GM12878 (cell line): ENCODE measurements at regions of chr15 and their contacts with region 1.

Region 1: GRCh38 chr15:70488002-70488605 is 275.3 kb downstream of the UACA start:
- DNase-seq: no peak
- ATAC-seq: peak; percentile 4; the same call in 1 of the 3 replicates
- H3K4me3 ChIP-seq: no peak overlapping the region
- H3K27ac ChIP-seq: no peak overlapping the region
- H3K4me1 ChIP-seq: peaks cover 51% of the 10 kb centered on the region
- H3K27me3 ChIP-seq: no peaks in the 10 kb centered on the region; a peak in 1 of 4 replicates
- CTCF ChIP-seq: peak; percentile 94 to 98 (median 96); a peak in 5 of 6 replicates
- EP300 ChIP-seq: no peak
- POLR2A ChIP-seq: no peak
- RAD21 ChIP-seq: peak; percentile 95

Region 2: DNA sequence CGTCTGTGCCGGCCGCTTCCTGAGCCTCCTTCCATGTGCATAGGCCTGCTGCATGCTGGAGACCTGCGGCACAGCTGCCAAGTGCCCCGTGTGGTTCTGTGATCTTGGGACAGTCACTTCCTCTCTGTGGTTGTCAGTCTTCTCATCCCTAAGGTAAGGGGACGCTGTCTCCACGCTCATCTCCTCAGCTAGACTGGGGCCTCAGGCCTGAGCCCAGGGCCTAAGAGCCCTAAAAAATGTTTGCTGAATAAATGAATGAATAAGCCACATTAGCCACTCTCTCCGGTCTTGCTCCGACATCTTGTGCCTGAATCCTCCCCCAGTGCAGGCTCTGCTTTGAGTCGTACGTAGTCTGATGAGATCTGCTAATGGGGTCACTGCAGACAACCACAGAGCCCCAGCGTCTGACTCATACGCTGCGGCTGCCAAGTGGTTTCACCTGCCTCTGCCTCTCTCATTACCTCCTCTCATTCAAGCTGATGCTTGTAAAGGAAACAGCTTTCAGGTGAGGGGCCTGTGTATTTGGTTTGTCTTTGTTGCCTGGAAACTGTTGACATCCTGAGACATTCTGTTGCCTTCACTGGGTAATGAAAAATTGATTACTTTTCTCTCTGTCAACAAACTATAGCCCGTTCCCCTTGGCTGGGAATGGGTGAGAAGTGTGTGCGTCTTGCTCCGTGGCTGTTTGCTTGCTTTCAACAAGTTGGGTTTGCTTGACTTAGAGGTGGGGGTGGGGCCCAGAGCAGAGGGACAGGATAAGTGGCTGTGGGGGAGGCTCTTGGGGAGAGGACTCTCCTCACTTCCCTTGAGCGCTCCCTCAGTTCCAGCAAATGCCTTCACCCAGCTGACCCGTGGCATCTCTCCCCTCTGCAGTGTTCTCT is 1019.6 kb before region 1 on chr15:
- CTCF ChIA-PET with region 1: interaction called, 3 read pairs
- POLR2A ChIA-PET with region 1: no interaction called
- RAD21 ChIA-PET with region 1: no interaction called
- SMC1A ChIA-PET with region 1: interaction called, 3 read pairs
- in situ Hi-C with region 1: loop called (anchors 5 kb)
- intact Hi-C with region 1: no loop called
- DNase-seq: no peak
- ATAC-seq: peak; percentile 95
- H3K4me3 ChIP-seq: no peak overlapping the region
- H3K27ac ChIP-seq: no peak overlapping the region
- H3K4me1 ChIP-seq: peaks cover 18% of the 10 kb centered on the region
- H3K27me3 ChIP-seq: no peaks in the 10 kb centered on the region
- CTCF ChIP-seq: no peak
- EP300 ChIP-seq: peak; percentile 49 to 61
- POLR2A ChIP-seq: no peak
- RAD21 ChIP-seq: no peak

Region 3: GRCh38 chr15:69729161-69729748 is 758.8 kb before region 1 on chr15:
- CTCF ChIA-PET with region 1: no interaction called
- POLR2A ChIA-PET with region 1: no interaction called
- RAD21 ChIA-PET with region 1: no interaction called
- SMC1A ChIA-PET with region 1: no interaction called
- in situ Hi-C with region 1: no loop called
- intact Hi-C with region 1: loop called (anchors 2 kb)
- DNase-seq: no peak
- ATAC-seq: peak; percentile 55; the same call in 2 of the 3 replicates
- H3K4me3 ChIP-seq: no peak overlapping the region
- H3K27ac ChIP-seq: no peak overlapping the region
- H3K4me1 ChIP-seq: peaks cover 8% of the 10 kb centered on the region; the same call in 1 of the 2 replicates
- H3K27me3 ChIP-seq: peaks cover 0 to 5% of the 10 kb centered on the region in 2 experiments; a peak in 2 of 4 replicates
- CTCF ChIP-seq: peak; percentile 67 to 82 (median 71)
- EP300 ChIP-seq: no peak
- POLR2A ChIP-seq: no peak
- RAD21 ChIP-seq: peak; percentile 83

Region 4: GRCh38 chr15:70014860-70015490 is 473.1 kb before region 1 on chr15:
- CTCF ChIA-PET with region 1: no interaction called
- POLR2A ChIA-PET with region 1: no interaction called
- RAD21 ChIA-PET with region 1: no interaction called
- SMC1A ChIA-PET with region 1: interaction called, 3 read pairs
- in situ Hi-C with region 1: no loop called
- intact Hi-C with region 1: loop called (anchors 5 kb)
- DNase-seq: peak; percentile 93
- ATAC-seq: peak; percentile 89
- H3K4me3 ChIP-seq: peak overlapping the region; percentile 10; the same call in 1 of the 2 replicates
- H3K27ac ChIP-seq: peak overlapping the region; percentile 84
- H3K4me1 ChIP-seq: peaks cover 60% of the 10 kb centered on the region
- H3K27me3 ChIP-seq: no peaks in the 10 kb centered on the region
- CTCF ChIP-seq: peak in 1 of 3 experiments; percentile 54; a peak in 2 of 6 replicates
- EP300 ChIP-seq: peak; percentile 76 to 79; a peak in 3 of 4 replicates
- POLR2A ChIP-seq: peak; percentile 79
- RAD21 ChIP-seq: peak; percentile 44; the same call in 1 of the 2 replicates

Region 5: GRCh38 chr15:70259028-70259424 is 229.1 kb before region 1 on chr15:
- CTCF ChIA-PET with region 1: interaction called, 4 read pairs
- POLR2A ChIA-PET with region 1: no interaction called
- RAD21 ChIA-PET with region 1: no interaction called
- SMC1A ChIA-PET with region 1: no interaction called
- in situ Hi-C with region 1: no loop called
- intact Hi-C with region 1: loop called (anchors 2 kb)
- DNase-seq: no peak
- ATAC-seq: peak; percentile 13; the same call in 2 of the 3 replicates
- H3K4me3 ChIP-seq: no peak overlapping the region
- H3K27ac ChIP-seq: 0 out of 2 replicates have a peak overlapping the region, but pooled peaks have one; percentile 42
- H3K4me1 ChIP-seq: peaks cover 49% of the 10 kb centered on the region
- H3K27me3 ChIP-seq: no peaks in the 10 kb centered on the region
- CTCF ChIP-seq: no peak
- EP300 ChIP-seq: no peak
- POLR2A ChIP-seq: no peak; the same call in 1 of the 2 replicates
- RAD21 ChIP-seq: no peak

Region 6: GRCh38 chr15:70504299-70504951 is 16.3 kb after region 1 on chr15:
- CTCF ChIA-PET with region 1: interaction called, 39 read pairs
- POLR2A ChIA-PET with region 1: interaction called, 17 read pairs
- RAD21 ChIA-PET with region 1: interaction called, 42 read pairs
- SMC1A ChIA-PET with region 1: interaction called, 40 read pairs
- in situ Hi-C with region 1: no loop called
- intact Hi-C with region 1: loop called (anchors 1 kb)
- DNase-seq: no peak
- ATAC-seq: peak; percentile 79
- H3K4me3 ChIP-seq: peak overlapping the region; percentile 30; the same call in 1 of the 2 replicates
- H3K27ac ChIP-seq: peak overlapping the region; percentile 91
- H3K4me1 ChIP-seq: peaks cover 53% of the 10 kb centered on the region
- H3K27me3 ChIP-seq: no peaks in the 10 kb centered on the region
- CTCF ChIP-seq: no peak
- EP300 ChIP-seq: no peak
- POLR2A ChIP-seq: peak; percentile 88
- RAD21 ChIP-seq: no peak

Region 7: DNA sequence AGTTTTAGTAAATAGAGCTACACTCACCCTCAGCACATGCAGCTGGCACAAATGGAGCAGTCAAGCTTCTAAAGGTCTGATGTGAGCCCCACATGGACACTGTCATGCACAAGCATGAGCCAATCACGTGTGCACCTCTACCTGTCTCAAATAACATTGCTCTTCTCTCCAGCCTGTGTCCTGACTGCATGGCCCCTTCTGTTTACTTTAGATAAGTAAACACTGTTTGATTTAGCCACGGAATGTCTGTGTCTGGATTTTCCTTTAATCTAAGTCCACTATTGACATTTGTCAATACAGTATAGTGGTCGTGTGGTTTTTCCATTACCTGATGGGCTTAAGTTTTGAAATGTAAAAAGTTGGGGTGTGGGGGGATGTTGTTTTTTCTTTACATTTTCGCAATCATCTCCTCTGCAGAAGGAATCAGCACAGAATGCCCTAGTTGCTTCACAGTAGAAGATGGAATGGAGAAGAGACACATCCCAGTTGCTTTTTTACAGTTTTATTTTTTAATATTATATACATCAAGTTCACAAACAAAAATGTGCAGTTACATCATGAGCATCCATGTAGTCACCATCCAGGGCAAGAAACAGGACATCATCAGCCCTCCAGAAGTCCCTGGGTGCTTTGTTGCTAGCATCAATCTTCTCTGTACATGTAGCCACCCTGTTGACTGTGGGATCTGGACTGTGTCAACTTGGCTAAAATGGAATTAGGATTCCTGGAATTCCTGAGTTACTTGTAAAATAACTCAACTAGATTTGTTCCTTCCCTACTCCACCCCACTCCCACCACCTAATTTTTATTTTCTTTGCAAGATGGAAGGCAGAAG is 129.2 kb after region 1 on chr15:
- CTCF ChIA-PET with region 1: no interaction called
- POLR2A ChIA-PET with region 1: no interaction called
- RAD21 ChIA-PET with region 1: no interaction called
- SMC1A ChIA-PET with region 1: no interaction called
- in situ Hi-C with region 1: no loop called
- intact Hi-C with region 1: no loop called
- DNase-seq: no peak
- ATAC-seq: no peak
- H3K4me3 ChIP-seq: no peak overlapping the region
- H3K27ac ChIP-seq: no peak overlapping the region
- H3K4me1 ChIP-seq: no peaks in the 10 kb centered on the region
- H3K27me3 ChIP-seq: peaks cover 0 to 3% of the 10 kb centered on the region in 2 experiments; a peak in 1 of 4 replicates
- CTCF ChIP-seq: no peak
- EP300 ChIP-seq: no peak
- POLR2A ChIP-seq: no peak
- RAD21 ChIP-seq: no peak

Region 8: DNA sequence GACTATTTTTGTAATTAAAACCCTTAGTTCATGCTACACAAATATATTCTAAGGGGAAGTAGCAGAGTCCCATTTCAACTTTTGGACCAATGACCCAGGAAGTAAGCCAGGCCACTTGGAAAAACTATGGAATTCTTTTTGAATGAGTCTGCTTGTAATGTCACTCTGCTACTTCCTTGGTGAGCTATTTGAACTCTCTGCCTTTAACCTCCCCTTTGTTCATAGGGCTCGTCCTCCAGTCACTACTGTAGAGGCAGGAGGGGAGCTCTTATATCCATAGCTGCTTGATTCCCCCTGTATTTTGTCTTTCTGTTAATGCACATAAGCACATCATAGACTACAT is 155.7 kb after region 1 on chr15:
- CTCF ChIA-PET with region 1: no interaction called
- POLR2A ChIA-PET with region 1: no interaction called
- RAD21 ChIA-PET with region 1: no interaction called
- SMC1A ChIA-PET with region 1: no interaction called
- in situ Hi-C with region 1: no loop called
- intact Hi-C with region 1: no loop called
- DNase-seq: no peak
- ATAC-seq: no peak
- H3K4me3 ChIP-seq: no peak overlapping the region
- H3K27ac ChIP-seq: no peak overlapping the region
- H3K4me1 ChIP-seq: no peaks in the 10 kb centered on the region
- H3K27me3 ChIP-seq: no peaks in the 10 kb centered on the region; a peak in 1 of 4 replicates
- CTCF ChIP-seq: no peak
- EP300 ChIP-seq: no peak
- POLR2A ChIP-seq: no peak
- RAD21 ChIP-seq: no peak